ENCODE measurements at regions of chr7 and their contacts with region 1.

Region 1: DNA sequence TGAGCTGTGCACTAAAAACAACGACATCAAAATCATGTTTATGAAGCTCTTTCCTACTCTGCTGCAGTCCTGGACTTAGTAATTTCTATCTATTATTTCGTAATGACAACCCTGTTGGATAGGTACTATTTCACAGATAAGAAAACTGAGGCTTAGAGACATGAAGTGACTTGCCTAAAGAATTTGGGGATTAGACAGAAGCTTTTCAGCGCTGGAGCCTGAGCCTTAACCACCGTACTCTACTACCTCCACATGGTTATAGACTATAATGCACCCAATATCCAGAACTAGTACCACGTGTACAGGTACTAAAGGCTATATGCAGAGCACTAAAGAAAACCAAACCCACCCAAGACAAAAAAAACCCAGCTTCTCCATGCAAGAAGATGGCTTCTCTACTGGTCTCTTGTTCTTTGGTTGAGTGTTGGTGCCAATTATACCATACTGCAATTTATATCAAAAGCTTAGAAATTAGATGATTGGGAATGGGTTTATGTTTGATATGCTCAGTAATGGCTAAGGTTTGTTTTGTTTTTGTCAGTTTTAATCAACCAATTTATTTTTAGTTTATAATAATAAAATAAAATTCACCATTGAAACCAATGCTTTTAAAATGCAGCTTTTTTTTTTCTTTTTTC is 6.5 kb upstream of the SNX10 start:
- DNase-seq: no peak
- ATAC-seq: no peak
- H3K4me3 ChIP-seq: no peak overlapping the region
- H3K27ac ChIP-seq: no peak overlapping the region
- H3K4me1 ChIP-seq: peaks cover 0 to 6% (median 0%) of the 10 kb centered on the region in 9 donors
- H3K27me3 ChIP-seq: peaks cover 0 to 3% (median 0%) of the 10 kb centered on the region in 7 donors
- CTCF ChIP-seq: peak in 1 of 9 donors; percentile 14

Region 2: DNA sequence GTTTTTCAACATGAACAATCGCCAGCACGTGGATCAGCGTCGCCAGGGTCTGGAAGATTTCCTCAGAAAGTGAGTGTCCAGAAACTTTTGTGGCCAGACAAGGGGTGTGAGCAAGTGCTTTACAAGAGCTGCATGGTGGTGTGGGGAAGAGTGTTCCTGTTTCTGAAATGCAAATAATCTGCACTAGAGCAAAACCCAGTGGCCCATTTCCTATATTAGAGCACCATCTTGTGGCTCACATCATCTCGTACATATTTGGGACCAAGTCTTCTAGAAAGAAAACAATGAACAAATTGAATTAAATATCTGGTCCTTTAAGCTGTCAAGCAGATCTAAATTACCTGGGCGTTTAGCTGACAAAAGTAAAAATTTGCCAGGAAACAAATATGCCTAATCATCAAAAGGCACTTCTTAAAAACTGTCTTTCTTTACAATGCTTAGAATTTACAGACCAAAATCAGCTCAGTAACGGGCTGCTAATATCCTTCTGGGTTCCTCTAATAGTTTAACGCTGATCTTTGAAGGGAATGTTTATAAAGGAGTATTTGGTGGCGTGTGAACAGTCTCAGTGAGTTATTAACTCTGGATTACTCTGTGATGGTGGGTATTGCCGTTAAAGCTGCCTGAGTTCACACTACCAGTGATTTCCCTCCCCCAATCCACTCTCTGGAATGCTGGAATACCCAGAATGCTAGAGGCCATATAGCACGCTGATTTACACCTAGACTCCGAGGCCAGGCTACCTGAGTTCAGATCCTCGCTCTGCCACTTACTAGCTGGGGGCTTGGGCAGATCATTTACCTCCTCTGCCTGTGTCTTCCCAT is 80.2 kb after region 1 on chr7:
- intact Hi-C with region 1: loop called in 1 of 10 experiments (anchors 10 kb)
- DNase-seq: peak in 1 of 2 donors; percentile 57
- ATAC-seq: peak; percentile 65 to 89 (median 80)
- H3K4me3 ChIP-seq: no peak overlapping the region
- H3K27ac ChIP-seq: no peak overlapping the region
- H3K4me1 ChIP-seq: peaks cover 0 to 26% (median 0%) of the 10 kb centered on the region in 9 donors
- H3K27me3 ChIP-seq: peaks cover 0 to 62% (median 40%) of the 10 kb centered on the region in 7 donors
- CTCF ChIP-seq: peak; percentile 53 to 87 (median 77)

Region 3: DNA sequence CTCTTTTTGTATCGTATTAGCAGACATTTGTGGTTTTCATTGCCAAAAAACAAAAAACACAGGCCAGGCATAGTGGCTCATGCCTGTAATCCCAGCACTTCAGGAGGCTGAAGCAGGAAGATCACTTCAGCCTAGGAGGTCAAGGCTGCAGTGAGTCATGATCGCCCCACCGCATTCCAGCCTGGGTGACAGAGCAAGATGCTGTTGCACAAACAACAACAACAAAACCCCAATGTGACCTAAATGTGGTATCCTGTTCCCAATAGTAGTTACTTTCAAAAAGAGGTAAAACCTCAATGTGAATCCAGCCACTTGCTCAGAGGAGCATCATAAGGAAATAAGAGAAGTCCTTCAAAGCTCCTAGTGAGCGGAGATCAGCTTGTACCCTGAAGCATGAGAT is 625.1 kb after region 1 on chr7:
- intact Hi-C with region 1: no loop called
- DNase-seq: no peak
- ATAC-seq: no peak
- H3K4me3 ChIP-seq: no peak overlapping the region
- H3K27ac ChIP-seq: peak overlapping the region in 1 of 10 donors; percentile 2
- H3K4me1 ChIP-seq: no peaks in the 10 kb centered on the region
- H3K27me3 ChIP-seq: peaks cover 0 to 26% (median 3%) of the 10 kb centered on the region in 7 donors
- CTCF ChIP-seq: no peak